Lower leg skin (tissue), 4 donors: ENCODE measurements at regions of chr3 and their contacts with region 1.

Region 1: DNA sequence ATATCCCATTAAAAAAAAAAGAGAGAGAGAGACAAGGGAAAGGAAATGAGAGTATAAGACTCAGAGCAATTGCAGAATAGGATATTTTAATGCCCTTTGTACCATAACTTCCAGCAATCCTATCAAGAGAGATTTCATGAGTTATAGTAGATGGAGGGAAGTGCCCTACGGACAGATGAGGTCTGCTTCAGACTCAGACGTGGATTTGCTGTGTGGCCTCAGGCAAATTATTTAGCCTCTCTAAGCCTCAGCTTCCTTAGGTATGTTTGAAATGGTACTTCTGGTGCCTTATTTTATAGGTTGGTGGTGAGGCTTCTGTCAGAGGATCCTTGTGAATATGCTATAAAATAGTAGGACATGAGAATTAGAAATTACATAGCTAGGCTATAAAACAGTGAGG is 448.2 kb downstream of the EDEM1 start:
- DNase-seq: no peak
- H3K4me3 ChIP-seq: no peak overlapping the region
- CTCF ChIP-seq: no peak
- POLR2A ChIP-seq: no peak

Region 2: DNA sequence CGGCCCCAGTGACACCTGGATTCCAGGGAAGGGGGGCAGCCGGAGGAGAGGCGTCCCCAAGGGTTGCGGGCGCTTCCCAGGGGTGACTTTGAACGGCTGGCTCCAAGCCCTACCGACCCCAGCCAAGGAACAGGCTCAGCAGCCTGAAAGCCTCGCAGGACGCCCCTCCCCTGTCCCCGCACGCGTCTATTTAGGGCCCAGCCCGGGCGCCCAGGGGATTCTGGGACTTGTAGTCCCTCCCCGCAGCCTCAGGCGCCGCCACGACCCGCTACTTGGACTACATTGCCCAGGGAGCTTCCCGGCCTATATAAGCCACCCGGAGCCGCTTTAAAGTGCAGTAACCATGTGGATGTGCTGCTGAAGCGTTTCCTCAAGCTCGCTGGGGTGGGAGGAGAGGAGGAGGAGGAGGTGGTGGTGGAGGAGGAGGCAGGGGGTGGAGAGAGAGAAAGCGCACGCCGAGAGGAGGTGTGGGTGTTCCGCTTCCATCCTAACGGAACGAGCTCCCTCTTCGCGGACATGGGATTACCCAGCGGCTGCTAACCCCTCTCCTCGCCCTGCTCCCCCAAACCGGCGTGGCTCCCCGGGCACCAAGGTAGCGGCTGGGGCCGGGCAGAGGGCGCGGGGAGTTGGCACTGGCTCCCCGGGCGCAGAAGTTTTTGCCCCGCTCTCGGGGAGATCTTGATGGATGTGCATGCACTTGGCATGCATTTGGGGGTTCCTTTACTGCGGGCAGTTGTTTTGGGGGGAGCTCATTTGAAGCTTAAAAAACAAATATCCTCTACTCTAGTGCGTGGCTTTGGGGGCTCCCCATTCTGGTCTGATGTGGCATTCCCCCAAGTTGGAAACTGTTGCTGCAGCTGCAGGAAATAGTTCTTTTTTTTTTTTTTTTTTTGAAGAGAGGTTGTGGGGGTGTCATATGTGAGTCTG is 1142.5 kb before region 1 on chr3 and contains the start of gene ITPR1:
- intact Hi-C with region 1: no loop called
- DNase-seq: peak; percentile 97 to 100
- H3K4me3 ChIP-seq: peak within 1 kb of the TSS; percentile 70
- CTCF ChIP-seq: no peak
- POLR2A ChIP-seq: peak in 1 of 2 donors; percentile 72
- total RNA-seq, gene ITPR1: 9.5 to 24.1 (median 17.5) TPM

Region 3: DNA sequence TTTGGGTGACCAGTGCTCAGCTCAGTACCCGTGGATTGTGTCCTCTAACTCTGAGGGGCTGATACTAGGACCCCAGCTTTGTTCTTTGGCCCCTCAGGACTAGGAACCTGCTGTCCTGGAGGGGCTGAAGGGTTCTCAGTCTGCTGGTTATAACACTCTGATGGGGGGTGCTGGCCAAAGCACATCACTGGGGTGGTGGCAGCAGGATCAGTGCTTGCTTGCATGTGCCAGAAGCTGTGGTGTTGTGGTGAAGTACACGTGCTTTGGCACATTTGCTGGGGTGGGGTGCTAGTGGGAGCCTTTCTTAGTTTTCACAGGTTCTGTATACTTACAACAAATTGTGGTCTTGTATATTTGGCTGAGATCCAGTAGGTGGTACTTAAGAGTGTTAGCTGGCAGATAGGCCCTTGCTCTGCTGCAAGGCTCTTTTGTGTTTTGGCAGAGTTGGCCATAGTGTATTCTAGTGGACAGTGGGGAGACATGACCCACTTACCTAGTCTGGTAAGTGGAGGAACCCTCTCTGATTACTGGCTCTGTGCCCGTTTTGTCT is 103.9 kb before region 1 on chr3:
- intact Hi-C with region 1: no loop called
- DNase-seq: no peak
- H3K4me3 ChIP-seq: no peak overlapping the region
- CTCF ChIP-seq: no peak
- POLR2A ChIP-seq: no peak

Region 4: GRCh38 chr3:7238565-7239295 is 1603.0 kb after region 1 on chr3:
- intact Hi-C with region 1: loop called (anchors 5 kb)
- DNase-seq: no peak
- H3K4me3 ChIP-seq: no peak overlapping the region
- CTCF ChIP-seq: no peak
- POLR2A ChIP-seq: no peak